Posterior cingulate gyrus (tissue), 11 donors: ENCODE measurements at regions of chr13 and their contacts with region 1.

Region 1: GRCh38 chr13:96141027-96141426 is 51.1 kb downstream of the HS6ST3 start:
- DNase-seq: no peak

Region 2: GRCh38 chr13:96817336-96817941 is 676.4 kb after region 1 on chr13:
- intact Hi-C with region 1: loop called (anchors 2 kb)
- DNase-seq: no peak